Heart left ventricle (tissue), 16 donors: ENCODE measurements at regions of chr13 and their contacts with region 1.

Region 1: DNA sequence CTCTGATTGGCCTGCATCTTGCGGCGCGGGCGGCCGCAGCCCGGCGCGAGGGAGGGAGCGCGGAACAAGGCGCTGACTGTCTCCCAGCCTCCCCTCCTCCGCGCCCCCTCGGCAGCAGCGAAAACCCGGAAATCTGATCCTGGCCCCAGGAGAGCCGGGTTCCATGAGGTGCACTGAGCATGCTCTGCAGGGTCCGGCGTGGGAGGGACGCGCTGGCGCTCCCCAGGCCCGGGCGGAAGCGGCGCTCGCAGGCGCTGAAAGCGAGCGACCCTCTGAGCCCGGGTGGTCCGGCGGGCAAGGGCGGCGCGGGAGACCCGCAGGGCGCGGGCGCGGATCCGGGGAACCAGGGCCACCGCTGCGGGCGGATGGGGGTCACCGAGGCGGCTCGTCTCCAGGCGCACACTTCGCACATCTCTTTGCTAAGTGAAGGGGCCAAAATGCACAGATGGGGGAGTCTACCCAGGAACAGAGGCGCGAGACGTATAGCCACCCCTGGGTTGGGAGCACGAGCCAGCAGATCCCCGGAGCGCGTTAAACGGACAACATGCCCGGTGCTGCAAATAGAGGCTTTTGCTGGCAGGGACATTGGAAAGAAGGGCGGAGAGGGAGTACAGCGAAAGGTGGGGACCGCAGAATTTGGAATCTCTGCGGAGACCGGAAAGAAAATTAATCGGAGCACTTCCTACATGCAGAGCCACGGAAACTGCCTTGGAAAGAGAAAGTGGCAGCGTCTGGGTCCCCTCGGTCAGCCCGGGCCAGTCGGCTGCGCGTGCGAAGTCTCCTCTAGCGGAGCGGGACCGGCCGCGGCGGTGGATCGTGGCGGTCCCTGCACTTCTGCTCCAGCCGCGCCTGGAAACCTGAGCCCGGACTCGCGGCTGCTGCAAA is 510 bp upstream of the PCDH9 start:
- DNase-seq: peak; percentile 96 to 97 (median 96)
- ATAC-seq: peak; percentile 96 to 99 (median 98)
- H3K4me3 ChIP-seq: peak overlapping the region; percentile 60 to 82 (median 78)
- H3K27ac ChIP-seq: peak overlapping the region; percentile 87 to 97 (median 93)
- H3K4me1 ChIP-seq: peaks cover 0 to 30% (median 5%) of the 10 kb centered on the region in 12 donors
- H3K27me3 ChIP-seq: peaks cover 0 to 10% (median 0%) of the 10 kb centered on the region in 9 donors
- CTCF ChIP-seq: no peak
- POLR2A ChIP-seq: peak in 1 of 2 donors; percentile 24

Region 2: DNA sequence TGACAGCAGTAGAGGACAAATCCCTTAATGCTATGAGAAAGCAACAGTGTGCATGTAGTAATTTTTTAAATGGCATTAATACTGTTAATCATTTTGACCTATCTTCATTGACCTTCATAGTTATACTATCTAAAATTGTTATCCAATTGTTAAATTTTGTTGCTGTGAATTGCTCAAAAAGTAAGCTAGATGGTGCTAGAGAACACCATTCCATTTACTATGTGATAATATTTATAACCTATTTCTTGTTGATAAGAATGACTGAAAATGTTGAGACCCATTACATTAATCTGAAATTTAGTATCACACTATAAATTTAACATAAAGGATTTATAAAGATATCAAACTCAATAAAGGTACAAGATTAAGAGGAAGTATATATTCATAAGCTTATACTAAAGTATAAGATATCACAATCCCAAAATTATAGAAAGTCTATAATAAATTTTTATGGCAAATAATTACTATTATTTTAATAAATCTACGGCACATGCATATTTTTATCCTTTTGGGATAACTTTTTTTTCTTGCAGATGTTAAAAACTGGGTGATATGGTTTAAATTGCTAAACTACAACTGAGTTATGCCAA is 1573.8 kb before region 1 on chr13:
- intact Hi-C with region 1: loop called in 7 of 10 experiments (anchors 5 to 10 kb)
- DNase-seq: no peak
- ATAC-seq: no peak
- H3K4me3 ChIP-seq: no peak overlapping the region
- H3K27ac ChIP-seq: no peak overlapping the region
- H3K4me1 ChIP-seq: no peaks in the 10 kb centered on the region
- H3K27me3 ChIP-seq: no peaks in the 10 kb centered on the region
- CTCF ChIP-seq: peak; percentile 20 to 67 (median 42)
- POLR2A ChIP-seq: no peak

Region 3: GRCh38 chr13:66624302-66624701 is 606.3 kb before region 1 on chr13:
- intact Hi-C with region 1: loop called in 3 of 10 experiments (anchors 5 to 10 kb)
- DNase-seq: no peak
- ATAC-seq: peak; percentile 95 to 98 (median 96)
- H3K4me3 ChIP-seq: no peak overlapping the region
- H3K27ac ChIP-seq: peak overlapping the region in 3 of 12 donors; percentile 0 to 49 (median 47)
- H3K4me1 ChIP-seq: peaks cover 0 to 16% (median 0%) of the 10 kb centered on the region in 12 donors
- H3K27me3 ChIP-seq: no peaks in the 10 kb centered on the region
- CTCF ChIP-seq: peak in 2 of 12 donors; percentile 12 to 16
- POLR2A ChIP-seq: no peak

Region 4: DNA sequence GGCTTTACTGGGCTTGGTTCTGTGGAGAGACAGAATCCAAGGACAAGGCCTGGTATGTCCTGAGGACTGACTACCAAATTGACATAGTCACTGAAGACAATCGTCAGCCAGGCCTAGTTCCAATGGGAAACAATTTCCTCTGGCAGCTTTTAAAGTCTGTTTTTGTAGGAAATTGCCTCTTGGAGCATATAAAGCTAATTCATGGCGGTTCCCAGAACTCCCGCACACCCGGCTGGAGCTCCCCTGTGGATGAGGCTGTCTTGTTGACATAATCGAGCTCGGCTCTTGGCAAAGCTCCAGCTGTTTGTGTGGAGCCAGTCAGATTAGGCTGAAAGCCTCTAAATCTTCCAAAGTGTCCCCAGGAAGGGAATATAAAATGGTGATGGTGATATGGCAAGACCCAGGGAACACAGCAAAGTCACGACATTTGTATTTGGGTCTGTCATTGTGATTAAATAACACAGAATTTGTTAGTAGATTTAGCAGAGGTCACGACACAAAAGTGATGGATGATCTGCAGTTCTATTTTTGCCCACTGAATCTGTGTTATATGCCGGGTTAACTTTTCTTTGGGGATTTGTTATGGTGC is 395.5 kb before region 1 on chr13:
- intact Hi-C with region 1: loop called in 4 of 10 experiments (anchors 10 kb)
- DNase-seq: peak; percentile 85 to 94 (median 86)
- ATAC-seq: peak; percentile 74 to 93 (median 85)
- H3K4me3 ChIP-seq: peak overlapping the region in 1 of 12 donors; percentile 13
- H3K27ac ChIP-seq: peak overlapping the region in 8 of 12 donors; percentile 18 to 61 (median 36)
- H3K4me1 ChIP-seq: peaks cover 0 to 21% (median 7%) of the 10 kb centered on the region in 12 donors
- H3K27me3 ChIP-seq: no peaks in the 10 kb centered on the region
- CTCF ChIP-seq: peak in 3 of 12 donors; percentile 4 to 20 (median 8)
- POLR2A ChIP-seq: no peak

Region 5: DNA sequence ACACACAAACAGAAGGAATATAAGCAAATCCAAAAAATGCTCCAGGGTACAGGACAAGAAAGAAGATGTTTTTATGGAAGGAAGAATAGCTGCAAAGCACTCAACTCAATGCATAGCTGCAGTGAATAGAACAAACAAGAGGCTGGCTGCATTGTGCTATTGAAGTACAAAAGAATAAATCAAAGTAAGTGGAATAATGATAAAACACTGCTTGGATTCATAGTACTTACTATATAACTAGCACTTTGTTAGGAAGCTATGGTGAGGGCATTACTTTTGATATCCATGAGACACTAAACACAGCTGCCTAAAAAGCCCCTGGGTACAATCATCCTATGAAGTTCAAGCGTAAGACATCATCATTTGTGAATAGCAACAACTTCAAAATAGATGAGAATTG is 350.7 kb before region 1 on chr13:
- intact Hi-C with region 1: no loop called
- DNase-seq: no peak
- ATAC-seq: no peak
- H3K4me3 ChIP-seq: no peak overlapping the region
- H3K27ac ChIP-seq: no peak overlapping the region
- H3K4me1 ChIP-seq: no peaks in the 10 kb centered on the region
- H3K27me3 ChIP-seq: no peaks in the 10 kb centered on the region
- CTCF ChIP-seq: no peak
- POLR2A ChIP-seq: no peak

Region 6: DNA sequence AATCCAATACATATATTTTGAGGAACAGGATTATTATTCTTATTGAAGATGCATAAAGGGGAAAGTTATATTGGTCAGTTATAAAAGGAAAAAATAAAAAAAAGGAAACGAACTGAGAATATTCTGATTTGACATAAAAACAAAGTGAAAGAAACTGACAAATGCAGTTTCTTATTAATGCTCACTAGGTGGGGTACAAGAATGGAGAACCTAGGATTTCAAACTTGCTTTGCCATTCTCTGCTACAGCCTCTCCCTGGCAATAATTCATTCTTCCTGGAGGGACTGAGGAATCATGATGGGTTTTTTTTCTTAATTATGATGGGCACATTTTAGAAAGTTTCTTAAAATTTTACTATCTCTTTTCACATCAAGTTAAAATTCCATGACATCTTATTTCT is 155.4 kb before region 1 on chr13:
- intact Hi-C with region 1: loop called in 1 of 10 experiments (anchors 5 kb)
- DNase-seq: no peak
- ATAC-seq: peak; percentile 32 to 79 (median 64)
- H3K4me3 ChIP-seq: peak overlapping the region in 8 of 12 donors; percentile 15 to 53 (median 34)
- H3K27ac ChIP-seq: no peak overlapping the region
- H3K4me1 ChIP-seq: peaks cover 0 to 6% (median 0%) of the 10 kb centered on the region in 12 donors
- H3K27me3 ChIP-seq: no peaks in the 10 kb centered on the region
- CTCF ChIP-seq: peak in 9 of 12 donors; percentile 14 to 59 (median 43)
- POLR2A ChIP-seq: no peak

Region 7: DNA sequence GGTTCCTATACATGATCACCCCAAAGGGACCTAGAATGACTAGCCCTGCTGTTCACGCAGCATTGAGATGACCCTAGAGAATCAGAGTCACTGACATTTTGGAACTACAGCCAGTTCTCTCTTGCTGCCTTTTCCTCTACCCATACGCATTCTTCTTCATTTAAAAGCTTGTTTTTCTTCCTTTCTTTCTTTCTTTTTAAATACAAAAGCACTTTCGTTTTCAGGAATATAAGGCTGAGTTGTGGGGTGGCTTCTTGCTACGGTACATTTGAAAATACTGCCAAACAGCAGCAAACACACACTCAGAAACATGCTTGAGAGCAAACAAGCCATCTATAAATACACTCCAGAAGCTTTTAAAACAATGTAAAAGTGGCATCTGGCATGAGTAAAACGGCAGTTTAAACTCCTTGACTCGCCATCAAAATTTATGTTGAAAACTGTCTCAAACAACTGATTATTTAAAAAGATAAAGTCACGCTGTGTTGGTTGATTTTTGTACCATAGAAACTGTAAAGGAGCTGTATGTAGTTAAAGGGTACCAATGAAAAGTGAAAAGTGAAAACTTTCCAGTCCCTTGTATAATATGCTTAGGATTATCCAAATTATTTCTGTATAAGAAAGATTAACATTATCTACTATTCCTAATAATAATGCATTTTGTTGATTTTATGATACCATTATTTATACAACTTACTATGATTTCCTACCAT is 96.1 kb before region 1 on chr13:
- intact Hi-C with region 1: loop called in 1 of 10 experiments (anchors 5 kb)
- DNase-seq: no peak
- ATAC-seq: peak in 2 of 4 donors; percentile 58 to 72
- H3K4me3 ChIP-seq: peak overlapping the region in 9 of 12 donors; percentile 15 to 48 (median 34)
- H3K27ac ChIP-seq: peak overlapping the region; percentile 47 to 79 (median 71)
- H3K4me1 ChIP-seq: peaks cover 0 to 30% (median 12%) of the 10 kb centered on the region in 12 donors
- H3K27me3 ChIP-seq: no peaks in the 10 kb centered on the region
- CTCF ChIP-seq: no peak
- POLR2A ChIP-seq: no peak

Region 8: GRCh38 chr13:67283637-67284036 is 53.0 kb after region 1 on chr13:
- intact Hi-C with region 1: no loop called
- DNase-seq: no peak
- ATAC-seq: no peak
- H3K4me3 ChIP-seq: no peak overlapping the region
- H3K27ac ChIP-seq: no peak overlapping the region
- H3K4me1 ChIP-seq: no peaks in the 10 kb centered on the region
- H3K27me3 ChIP-seq: no peaks in the 10 kb centered on the region
- CTCF ChIP-seq: no peak
- POLR2A ChIP-seq: no peak

Region 9: GRCh38 chr13:67557642-67558241 is 327.1 kb after region 1 on chr13:
- intact Hi-C with region 1: no loop called
- DNase-seq: no peak
- ATAC-seq: no peak
- H3K4me3 ChIP-seq: no peak overlapping the region
- H3K27ac ChIP-seq: no peak overlapping the region
- H3K4me1 ChIP-seq: no peaks in the 10 kb centered on the region
- H3K27me3 ChIP-seq: no peaks in the 10 kb centered on the region
- CTCF ChIP-seq: no peak
- POLR2A ChIP-seq: no peak

Region 10: GRCh38 chr13:68027306-68027705 is 796.7 kb after region 1 on chr13:
- intact Hi-C with region 1: loop called in 1 of 10 experiments (anchors 5 kb)
- DNase-seq: no peak
- ATAC-seq: no peak
- H3K4me3 ChIP-seq: peak overlapping the region in 5 of 12 donors; percentile 33 to 39 (median 35)
- H3K27ac ChIP-seq: peak overlapping the region in 2 of 12 donors; percentile 34 to 62
- H3K4me1 ChIP-seq: peaks cover 0 to 3% (median 0%) of the 10 kb centered on the region in 12 donors
- H3K27me3 ChIP-seq: no peaks in the 10 kb centered on the region
- CTCF ChIP-seq: no peak
- POLR2A ChIP-seq: no peak